GM12878 (cell line): ENCODE measurements at regions of chr20 and their contacts with region 1.

Region 1: DNA sequence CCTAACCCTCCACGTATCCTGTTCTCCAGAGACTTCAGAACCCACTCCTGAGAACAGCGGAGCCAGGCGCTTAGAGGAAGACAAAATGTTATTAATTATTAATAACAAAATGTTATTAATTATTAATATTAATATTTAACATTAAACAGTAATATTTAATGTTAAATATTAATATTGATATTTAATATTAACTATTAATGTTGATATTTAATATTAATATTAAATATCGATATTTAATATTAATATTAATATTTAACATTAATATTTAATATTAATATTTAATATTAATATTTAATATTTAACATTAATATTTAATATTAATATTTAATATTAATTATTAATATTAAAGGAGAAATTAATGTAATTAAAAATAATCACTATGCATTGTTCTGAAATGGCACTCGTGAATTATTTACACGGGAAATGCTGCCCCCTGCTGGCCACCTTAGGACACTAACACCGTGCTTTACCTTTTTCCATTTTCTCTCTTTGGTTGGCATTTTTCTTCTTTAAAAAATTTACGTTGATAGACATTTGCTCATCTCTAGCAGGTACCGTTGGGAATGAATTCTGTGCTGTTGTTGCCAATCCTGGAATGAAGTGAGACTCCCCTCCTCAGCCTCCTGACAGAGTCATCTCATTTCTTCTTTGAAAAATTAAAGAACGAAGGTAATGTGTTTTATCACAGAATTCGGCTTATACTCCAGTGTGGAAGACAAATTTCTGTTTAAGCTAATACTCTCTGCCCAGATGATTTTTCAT is 7.5 kb upstream of the GGTLC1 start:
- DNase-seq: no peak
- ATAC-seq: peak; percentile 54
- H3K4me3 ChIP-seq: no peak overlapping the region
- H3K27ac ChIP-seq: no peak overlapping the region
- H3K4me1 ChIP-seq: no peaks in the 10 kb centered on the region
- H3K27me3 ChIP-seq: no peaks in the 10 kb centered on the region
- CTCF ChIP-seq: peak; percentile 49 to 69 (median 53); a peak in 5 of 6 replicates
- EP300 ChIP-seq: no peak
- POLR2A ChIP-seq: no peak
- RAD21 ChIP-seq: peak; percentile 58

Region 2: DNA sequence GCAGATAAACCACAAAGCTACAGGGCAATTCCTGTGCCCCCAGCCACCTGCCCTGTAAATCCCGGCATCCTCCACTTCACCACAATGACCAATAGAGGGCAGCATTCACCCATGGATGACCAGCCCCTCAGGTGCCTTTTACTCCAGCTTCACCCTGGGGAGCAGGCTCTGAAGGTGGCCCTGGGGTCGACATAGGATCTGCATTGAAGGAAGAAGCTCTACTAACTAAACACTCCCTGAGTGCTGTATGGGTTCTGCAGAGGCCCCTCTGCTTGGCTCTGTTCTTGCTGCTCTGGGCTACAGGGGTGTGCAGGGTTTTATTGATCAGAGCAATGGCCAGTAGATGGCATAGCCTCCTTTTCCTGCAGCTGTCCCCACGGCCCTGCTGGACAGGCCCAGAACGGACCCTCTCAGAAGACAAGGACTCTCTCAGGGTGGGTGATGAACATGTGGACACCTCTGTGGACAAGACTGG is 327.6 kb before region 1 on chr20:
- CTCF ChIA-PET with region 1: no interaction called
- POLR2A ChIA-PET with region 1: no interaction called
- RAD21 ChIA-PET with region 1: no interaction called
- SMC1A ChIA-PET with region 1: no interaction called
- in situ Hi-C with region 1: no loop called
- intact Hi-C with region 1: loop called (anchors 2 kb)
- DNase-seq: no peak
- ATAC-seq: peak; percentile 96
- H3K4me3 ChIP-seq: no peak overlapping the region
- H3K27ac ChIP-seq: no peak overlapping the region
- H3K4me1 ChIP-seq: no peaks in the 10 kb centered on the region
- H3K27me3 ChIP-seq: no peaks in the 10 kb centered on the region
- CTCF ChIP-seq: peak; percentile 73 to 83 (median 79)
- EP300 ChIP-seq: no peak
- POLR2A ChIP-seq: no peak
- RAD21 ChIP-seq: peak; percentile 81

Region 3: GRCh38 chr20:23794841-23795240 is 201.2 kb before region 1 on chr20:
- CTCF ChIA-PET with region 1: no interaction called
- POLR2A ChIA-PET with region 1: no interaction called
- RAD21 ChIA-PET with region 1: no interaction called
- SMC1A ChIA-PET with region 1: no interaction called
- in situ Hi-C with region 1: loop called (anchors 5 kb)
- intact Hi-C with region 1: loop called (anchors 5 kb)
- DNase-seq: no peak
- ATAC-seq: no peak
- H3K4me3 ChIP-seq: no peak overlapping the region
- H3K27ac ChIP-seq: no peak overlapping the region
- H3K4me1 ChIP-seq: no peaks in the 10 kb centered on the region
- H3K27me3 ChIP-seq: no peaks in the 10 kb centered on the region
- CTCF ChIP-seq: no peak
- EP300 ChIP-seq: no peak
- POLR2A ChIP-seq: no peak
- RAD21 ChIP-seq: no peak

Region 4: DNA sequence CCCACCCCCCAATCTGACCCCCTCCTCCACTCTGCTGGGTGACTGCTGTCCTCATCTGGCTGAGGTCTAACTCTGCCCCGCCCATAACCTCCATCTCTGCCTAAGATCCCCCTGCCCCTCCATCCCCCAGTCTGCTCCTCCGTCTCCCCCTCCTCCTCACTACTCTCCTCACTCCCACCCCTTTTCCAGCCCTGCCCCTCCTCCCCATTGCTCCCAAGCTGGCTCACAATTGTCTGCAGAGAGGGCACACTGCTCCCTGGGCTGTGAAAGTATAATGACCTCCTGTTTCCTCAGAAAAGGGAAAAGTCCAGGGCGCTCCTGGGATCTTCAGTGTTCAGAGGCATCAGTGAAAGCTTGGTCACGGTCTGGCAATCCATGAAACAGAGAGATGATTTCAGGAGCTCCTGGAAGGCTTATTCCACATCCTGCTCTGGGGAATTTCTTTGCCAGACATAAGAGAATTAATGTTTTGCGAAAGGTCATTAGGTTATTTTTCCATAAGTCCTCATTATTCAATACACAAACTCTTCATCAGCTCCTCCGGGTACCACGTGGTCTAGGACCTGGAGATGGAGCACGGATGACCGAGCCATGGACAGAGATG is 138.0 kb before region 1 on chr20:
- CTCF ChIA-PET with region 1: no interaction called
- POLR2A ChIA-PET with region 1: no interaction called
- RAD21 ChIA-PET with region 1: no interaction called
- SMC1A ChIA-PET with region 1: no interaction called
- in situ Hi-C with region 1: no loop called
- intact Hi-C with region 1: no loop called
- DNase-seq: no peak
- ATAC-seq: no peak
- H3K4me3 ChIP-seq: no peak overlapping the region
- H3K27ac ChIP-seq: no peak overlapping the region
- H3K4me1 ChIP-seq: no peaks in the 10 kb centered on the region
- H3K27me3 ChIP-seq: no peaks in the 10 kb centered on the region
- CTCF ChIP-seq: no peak
- EP300 ChIP-seq: no peak
- POLR2A ChIP-seq: no peak
- RAD21 ChIP-seq: no peak

Region 5: GRCh38 chr20:23889775-23890211 is 106.3 kb before region 1 on chr20:
- CTCF ChIA-PET with region 1: interaction called, 3 read pairs
- POLR2A ChIA-PET with region 1: no interaction called
- RAD21 ChIA-PET with region 1: no interaction called
- SMC1A ChIA-PET with region 1: no interaction called
- in situ Hi-C with region 1: no loop called
- intact Hi-C with region 1: loop called (anchors 2 kb)
- DNase-seq: no peak
- ATAC-seq: peak; percentile 97
- H3K4me3 ChIP-seq: no peak overlapping the region
- H3K27ac ChIP-seq: no peak overlapping the region
- H3K4me1 ChIP-seq: no peaks in the 10 kb centered on the region
- H3K27me3 ChIP-seq: no peaks in the 10 kb centered on the region
- CTCF ChIP-seq: peak; percentile 65 to 74 (median 71)
- EP300 ChIP-seq: no peak
- POLR2A ChIP-seq: no peak
- RAD21 ChIP-seq: peak; percentile 75

Region 6: GRCh38 chr20:23937303-23938117 is 58.6 kb before region 1 on chr20:
- CTCF ChIA-PET with region 1: interaction called, 5 read pairs
- POLR2A ChIA-PET with region 1: no interaction called
- RAD21 ChIA-PET with region 1: no interaction called
- SMC1A ChIA-PET with region 1: interaction called, 3 read pairs
- in situ Hi-C with region 1: no loop called
- intact Hi-C with region 1: loop called (anchors 5 kb)
- DNase-seq: peak; percentile 3
- ATAC-seq: peak; percentile 89
- H3K4me3 ChIP-seq: no peak overlapping the region
- H3K27ac ChIP-seq: no peak overlapping the region
- H3K4me1 ChIP-seq: no peaks in the 10 kb centered on the region
- H3K27me3 ChIP-seq: no peaks in the 10 kb centered on the region
- CTCF ChIP-seq: peak; percentile 62 to 83 (median 69); a peak in 5 of 6 replicates
- EP300 ChIP-seq: no peak
- POLR2A ChIP-seq: no peak
- RAD21 ChIP-seq: peak; percentile 79

Region 7: DNA sequence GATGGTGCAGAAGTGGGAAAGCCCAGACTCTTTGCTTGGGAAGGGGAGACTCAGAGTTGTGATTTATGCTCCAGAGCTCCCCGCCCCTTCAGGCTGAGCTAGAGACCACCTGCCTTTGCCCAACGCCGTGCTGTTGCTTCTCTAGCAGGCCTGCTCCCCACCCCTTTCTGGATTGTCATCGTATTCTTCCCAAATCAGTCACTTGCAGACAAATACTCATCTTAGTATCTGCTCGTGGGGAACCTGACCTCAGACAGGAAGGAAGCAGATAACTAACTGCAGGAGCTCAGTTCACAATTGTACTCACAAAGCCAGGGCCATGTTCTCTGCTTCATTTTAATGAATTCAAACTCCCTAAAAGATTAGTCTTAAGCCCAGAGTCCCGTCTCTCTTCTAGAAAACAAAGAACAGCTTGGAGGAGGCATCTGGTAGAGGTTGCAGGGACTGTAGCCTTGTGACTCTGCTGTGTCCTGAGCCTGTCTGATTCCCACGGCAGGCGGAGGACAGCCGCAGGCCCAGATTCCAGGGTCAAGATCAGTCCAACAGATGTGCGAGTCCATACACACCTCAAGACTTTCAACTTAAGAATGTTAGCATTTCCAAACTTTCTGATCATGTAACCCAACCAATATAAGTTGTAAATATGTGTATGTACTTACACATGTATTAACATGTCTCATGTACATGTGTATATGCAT is 49.7 kb after region 1 on chr20:
- CTCF ChIA-PET with region 1: no interaction called
- POLR2A ChIA-PET with region 1: no interaction called
- RAD21 ChIA-PET with region 1: no interaction called
- SMC1A ChIA-PET with region 1: no interaction called
- in situ Hi-C with region 1: loop called (anchors 5 kb)
- intact Hi-C with region 1: no loop called
- DNase-seq: no peak
- ATAC-seq: no peak
- H3K4me3 ChIP-seq: no peak overlapping the region
- H3K27ac ChIP-seq: no peak overlapping the region
- H3K4me1 ChIP-seq: no peaks in the 10 kb centered on the region
- H3K27me3 ChIP-seq: no peaks in the 10 kb centered on the region; a peak in 1 of 4 replicates
- CTCF ChIP-seq: no peak
- EP300 ChIP-seq: no peak
- POLR2A ChIP-seq: no peak
- RAD21 ChIP-seq: no peak